Activated CD8-positive, alpha-beta T cell treated with anti-CD3 and anti-CD28 coated beads, Interleukin-2, amount 10 ng/mL, durations not matched to agents 7 days and 5 days (primary cell): ENCODE measurements at regions of chrX and their contacts with region 1.

Region 1: GRCh38 chrX:40175511-40176350 is 78.0 kb upstream of the BCOR start:
- DNase-seq: peak; percentile 79
- ATAC-seq: peak; percentile 40
- H3K4me3 Mint-ChIP-seq: peak overlapping the region; percentile 78
- H3K27ac Mint-ChIP-seq: peak overlapping the region; percentile 96
- H3K4me1 Mint-ChIP-seq: peaks cover 39% of the 10 kb centered on the region
- H3K27me3 Mint-ChIP-seq: no peaks in the 10 kb centered on the region

Region 2: GRCh38 chrX:40201329-40201885 is 25.7 kb after region 1 on chrX:
- CTCF ChIA-PET with region 1: no interaction called
- POLR2A ChIA-PET with region 1: interaction called, 14 read pairs
- DNase-seq: peak; percentile 76
- ATAC-seq: peak; percentile 97
- H3K4me3 Mint-ChIP-seq: peak overlapping the region; percentile 58
- H3K27ac Mint-ChIP-seq: peak overlapping the region; percentile 94
- H3K4me1 Mint-ChIP-seq: peaks cover 26% of the 10 kb centered on the region
- H3K27me3 Mint-ChIP-seq: no peaks in the 10 kb centered on the region

Region 3: DNA sequence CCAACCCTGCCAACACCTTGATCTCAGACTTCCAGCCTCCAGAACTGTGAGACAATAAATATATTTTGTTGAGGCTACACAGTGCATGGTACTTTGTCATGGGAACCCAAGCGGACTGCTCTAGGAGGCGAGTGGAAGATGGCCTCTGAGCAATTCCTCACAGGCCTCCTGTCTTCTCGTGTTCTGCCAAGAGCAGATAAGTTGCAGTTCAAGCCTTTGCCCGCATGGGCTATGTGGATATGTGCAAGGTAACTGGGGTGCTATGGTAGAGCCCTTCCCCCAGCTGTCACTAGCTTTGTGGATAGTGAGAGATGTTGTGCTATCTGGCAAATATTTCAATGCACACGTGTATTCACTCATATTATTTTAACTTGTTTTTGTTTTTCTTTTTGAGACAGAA is 78.0 kb after region 1 on chrX:
- CTCF ChIA-PET with region 1: no interaction called
- POLR2A ChIA-PET with region 1: no interaction called
- DNase-seq: no peak
- ATAC-seq: no peak
- H3K4me3 Mint-ChIP-seq: no peak overlapping the region
- H3K27ac Mint-ChIP-seq: no peak overlapping the region
- H3K4me1 Mint-ChIP-seq: no peaks in the 10 kb centered on the region
- H3K27me3 Mint-ChIP-seq: no peaks in the 10 kb centered on the region

Region 4: GRCh38 chrX:40496728-40497127 is 321.0 kb after region 1 on chrX:
- CTCF ChIA-PET with region 1: no interaction called
- POLR2A ChIA-PET with region 1: no interaction called
- DNase-seq: no peak
- ATAC-seq: no peak
- H3K4me3 Mint-ChIP-seq: no peak overlapping the region
- H3K27ac Mint-ChIP-seq: no peak overlapping the region
- H3K4me1 Mint-ChIP-seq: peaks cover 3% of the 10 kb centered on the region
- H3K27me3 Mint-ChIP-seq: no peaks in the 10 kb centered on the region